Calu3 (cell line): ENCODE measurements at regions of chr4 and their contacts with region 1.

Region 1: GRCh38 chr4:150297861-150298474 is 219.7 kb downstream of the DCLK2 start:
- DNase-seq: peak; percentile 28
- H3K4me3 Mint-ChIP-seq: no peak overlapping the region
- H3K27ac Mint-ChIP-seq: no peak overlapping the region
- H3K4me1 Mint-ChIP-seq: no peaks in the 10 kb centered on the region
- H3K27me3 Mint-ChIP-seq: no peaks in the 10 kb centered on the region
- CTCF ChIP-seq: no peak

Region 2: GRCh38 chr4:150310159-150310895 is 12.4 kb after region 1 on chr4:
- CTCF ChIA-PET with region 1: no interaction called
- intact Hi-C with region 1: no loop called
- DNase-seq: no peak
- H3K4me3 Mint-ChIP-seq: no peak overlapping the region
- H3K27ac Mint-ChIP-seq: no peak overlapping the region
- H3K4me1 Mint-ChIP-seq: no peaks in the 10 kb centered on the region
- H3K27me3 Mint-ChIP-seq: no peaks in the 10 kb centered on the region
- CTCF ChIP-seq: no peak

Region 3: GRCh38 chr4:150579551-150580234 is 281.7 kb after region 1 on chr4:
- CTCF ChIA-PET with region 1: no interaction called
- intact Hi-C with region 1: loop called (anchors 10 kb)
- DNase-seq: peak; percentile 24
- H3K4me3 Mint-ChIP-seq: peak overlapping the region; percentile 79
- H3K27ac Mint-ChIP-seq: peak overlapping the region; percentile 88
- H3K4me1 Mint-ChIP-seq: no peaks in the 10 kb centered on the region
- H3K27me3 Mint-ChIP-seq: no peaks in the 10 kb centered on the region
- CTCF ChIP-seq: no peak

Region 4: GRCh38 chr4:150593996-150594395 is 296.0 kb after region 1 on chr4:
- CTCF ChIA-PET with region 1: no interaction called
- intact Hi-C with region 1: loop called (anchors 5 kb)
- DNase-seq: no peak
- H3K4me3 Mint-ChIP-seq: no peak overlapping the region
- H3K27ac Mint-ChIP-seq: no peak overlapping the region
- H3K4me1 Mint-ChIP-seq: no peaks in the 10 kb centered on the region
- H3K27me3 Mint-ChIP-seq: no peaks in the 10 kb centered on the region
- CTCF ChIP-seq: no peak

Region 5: GRCh38 chr4:150867148-150867547 is 569.2 kb after region 1 on chr4:
- CTCF ChIA-PET with region 1: interaction called, 7 read pairs
- intact Hi-C with region 1: loop called (anchors 2 kb)
- DNase-seq: peak; percentile 39
- H3K4me3 Mint-ChIP-seq: no peak overlapping the region
- H3K27ac Mint-ChIP-seq: no peak overlapping the region
- H3K4me1 Mint-ChIP-seq: no peaks in the 10 kb centered on the region
- H3K27me3 Mint-ChIP-seq: no peaks in the 10 kb centered on the region
- CTCF ChIP-seq: no peak

Region 6: GRCh38 chr4:150886599-150886998 is 588.6 kb after region 1 on chr4:
- CTCF ChIA-PET with region 1: no interaction called
- intact Hi-C with region 1: no loop called
- DNase-seq: no peak
- H3K4me3 Mint-ChIP-seq: no peak overlapping the region
- H3K27ac Mint-ChIP-seq: no peak overlapping the region
- H3K4me1 Mint-ChIP-seq: peaks cover 11% of the 10 kb centered on the region
- H3K27me3 Mint-ChIP-seq: no peaks in the 10 kb centered on the region
- CTCF ChIP-seq: no peak